CD8-positive, alpha-beta T cell (primary cell): ENCODE measurements at regions of chr19 and their contacts with region 1.

Region 1: DNA sequence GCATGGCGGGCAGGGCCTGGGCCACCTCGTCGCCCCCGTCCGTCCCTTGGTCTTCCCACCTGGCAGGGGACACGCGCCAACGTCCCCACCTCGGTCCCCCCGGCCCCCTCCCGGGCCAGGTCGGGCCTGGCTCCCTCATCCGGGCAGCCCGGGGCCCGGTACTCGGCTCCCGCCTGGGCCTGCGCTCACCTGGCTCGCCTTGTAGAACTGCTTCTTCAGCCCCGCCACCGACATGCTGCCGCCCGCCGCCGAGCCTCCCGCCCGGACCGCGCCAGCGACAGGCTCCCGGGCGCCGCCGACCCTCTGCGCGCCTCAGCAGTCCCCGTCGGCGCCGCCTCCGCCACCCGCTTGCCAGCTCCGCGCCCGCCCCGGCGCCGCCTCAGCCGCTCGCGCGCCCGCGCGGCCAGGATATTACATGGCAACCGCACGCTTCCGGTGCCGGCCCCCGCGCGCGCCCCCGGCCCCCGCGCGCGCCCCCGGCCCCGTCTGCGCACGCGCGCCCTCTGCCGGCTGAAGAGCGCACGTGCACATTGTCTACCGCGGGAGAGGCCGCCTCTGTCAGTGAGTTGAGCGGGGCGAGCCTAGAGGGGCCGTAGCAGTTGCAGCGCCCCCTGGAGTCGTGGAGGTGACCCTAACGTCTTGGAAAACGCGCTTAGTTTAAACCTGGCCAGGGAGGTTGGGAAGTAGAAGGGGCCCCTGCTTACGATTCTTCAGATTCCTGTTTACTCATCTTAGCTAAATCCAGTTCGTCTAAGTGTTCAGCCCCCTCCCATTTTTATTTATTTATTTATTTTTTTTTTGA is at the start of gene SH3GL1:
- DNase-seq: peak; percentile 80 to 97 (median 94)
- ATAC-seq: peak; percentile 66
- H3K4me3 ChIP-seq: peak within 1 kb of the TSS; percentile 83 to 92
- H3K4me3 Mint-ChIP-seq: peak within 1 kb of the TSS; percentile 91
- H3K27ac ChIP-seq: peak within 1 kb of the TSS; percentile 77 to 97
- H3K27ac Mint-ChIP-seq: peak within 1 kb of the TSS; percentile 98
- H3K4me1 ChIP-seq: peaks cover 44% of the 10 kb centered on the region
- H3K4me1 Mint-ChIP-seq: peaks cover 55% of the 10 kb centered on the region
- H3K27me3 ChIP-seq: no peaks in the 10 kb centered on the region
- H3K27me3 Mint-ChIP-seq: no peaks in the 10 kb centered on the region
- CTCF ChIP-seq: peak; percentile 71
- total RNA-seq, gene SH3GL1: 35.0 to 38.1 TPM

Region 2: DNA sequence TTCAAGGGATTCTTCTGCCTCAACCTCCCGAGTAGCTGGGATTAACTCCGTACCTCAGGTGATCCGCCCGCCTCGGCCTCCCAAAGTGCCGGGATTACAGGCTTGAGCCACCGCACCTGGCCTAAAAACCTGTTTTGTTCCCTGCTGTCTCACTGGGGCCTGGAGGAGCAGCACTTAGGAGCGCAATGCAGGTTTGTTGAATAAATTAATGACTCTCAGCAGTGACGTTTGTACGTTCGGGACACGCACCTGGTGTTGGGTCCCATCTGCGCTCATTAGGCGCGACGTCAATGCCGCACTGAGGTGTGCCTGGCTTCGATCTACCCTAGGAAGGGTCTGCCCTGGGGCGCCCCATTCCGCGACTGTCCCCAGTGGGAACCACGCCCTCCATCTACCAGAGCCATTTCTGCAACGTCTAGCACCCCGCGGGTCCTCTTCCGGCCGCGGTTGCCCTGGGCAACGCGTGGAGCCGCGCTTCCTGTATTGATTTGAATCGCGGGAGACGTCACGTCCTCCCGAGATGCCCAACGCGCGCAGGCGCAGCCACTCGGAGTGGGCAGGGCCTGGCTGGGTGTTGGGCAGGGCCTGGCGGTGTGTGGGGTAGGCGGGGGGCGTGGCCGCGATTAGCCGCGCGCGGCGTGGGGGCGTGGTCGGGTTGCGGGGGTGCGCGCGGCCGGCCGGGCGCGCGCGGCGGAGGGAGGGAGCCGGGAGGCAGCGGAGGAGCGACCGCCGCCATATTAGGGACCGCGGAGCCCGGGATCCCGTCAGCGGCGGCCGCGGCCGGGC is 894.5 kb before region 1 on chr19 and contains the start of gene FZR1:
- CTCF ChIA-PET with region 1: no interaction called
- POLR2A ChIA-PET with region 1: no interaction called
- intact Hi-C with region 1: loop called in 1 of 2 experiments (anchors 2 kb)
- DNase-seq: peak; percentile 99 to 100 (median 100)
- ATAC-seq: peak; percentile 85
- H3K4me3 ChIP-seq: peak within 1 kb of the TSS; percentile 76 to 83
- H3K4me3 Mint-ChIP-seq: peak within 1 kb of the TSS; percentile 85
- H3K27ac ChIP-seq: peak within 1 kb of the TSS; percentile 97
- H3K27ac Mint-ChIP-seq: peak within 1 kb of the TSS; percentile 97
- H3K4me1 ChIP-seq: peaks cover 36% of the 10 kb centered on the region
- H3K4me1 Mint-ChIP-seq: peaks cover 48% of the 10 kb centered on the region
- H3K27me3 ChIP-seq: no peaks in the 10 kb centered on the region
- H3K27me3 Mint-ChIP-seq: no peaks in the 10 kb centered on the region
- CTCF ChIP-seq: no peak
- total RNA-seq, gene FZR1: 130 to 142 TPM

Region 3: GRCh38 chr19:4007021-4007835 is 393.1 kb before region 1 on chr19 and contains the start of gene PIAS4:
- CTCF ChIA-PET with region 1: no interaction called
- POLR2A ChIA-PET with region 1: no interaction called
- intact Hi-C with region 1: loop called in 1 of 2 experiments (anchors 1 kb)
- DNase-seq: peak; percentile 89 to 99 (median 96)
- ATAC-seq: peak; percentile 91
- H3K4me3 ChIP-seq: peak within 1 kb of the TSS; percentile 68 to 87
- H3K4me3 Mint-ChIP-seq: peak within 1 kb of the TSS; percentile 83
- H3K27ac ChIP-seq: peak within 1 kb of the TSS; percentile 46 to 58
- H3K27ac Mint-ChIP-seq: peak within 1 kb of the TSS; percentile 84
- H3K4me1 ChIP-seq: peaks cover 38% of the 10 kb centered on the region
- H3K4me1 Mint-ChIP-seq: peaks cover 24% of the 10 kb centered on the region
- H3K27me3 ChIP-seq: no peaks in the 10 kb centered on the region
- H3K27me3 Mint-ChIP-seq: no peaks in the 10 kb centered on the region
- CTCF ChIP-seq: no peak
- total RNA-seq, gene PIAS4: 11.6 to 14.9 TPM

Region 4: GRCh38 chr19:4267101-4267900 is 133.0 kb before region 1 on chr19:
- CTCF ChIA-PET with region 1: interaction called, 3 read pairs
- POLR2A ChIA-PET with region 1: interaction called, 3 read pairs
- intact Hi-C with region 1: loop called (anchors 1 to 5 kb)
- DNase-seq: peak; percentile 37 to 76 (median 65)
- ATAC-seq: peak; percentile 70
- H3K4me3 ChIP-seq: no peak overlapping the region
- H3K4me3 Mint-ChIP-seq: no peak overlapping the region
- H3K27ac ChIP-seq: no peak overlapping the region
- H3K27ac Mint-ChIP-seq: peak overlapping the region; percentile 23
- H3K4me1 ChIP-seq: peaks cover 15% of the 10 kb centered on the region
- H3K4me1 Mint-ChIP-seq: peaks cover 25% of the 10 kb centered on the region
- H3K27me3 ChIP-seq: no peaks in the 10 kb centered on the region
- H3K27me3 Mint-ChIP-seq: no peaks in the 10 kb centered on the region
- CTCF ChIP-seq: peak; percentile 82

Region 5: DNA sequence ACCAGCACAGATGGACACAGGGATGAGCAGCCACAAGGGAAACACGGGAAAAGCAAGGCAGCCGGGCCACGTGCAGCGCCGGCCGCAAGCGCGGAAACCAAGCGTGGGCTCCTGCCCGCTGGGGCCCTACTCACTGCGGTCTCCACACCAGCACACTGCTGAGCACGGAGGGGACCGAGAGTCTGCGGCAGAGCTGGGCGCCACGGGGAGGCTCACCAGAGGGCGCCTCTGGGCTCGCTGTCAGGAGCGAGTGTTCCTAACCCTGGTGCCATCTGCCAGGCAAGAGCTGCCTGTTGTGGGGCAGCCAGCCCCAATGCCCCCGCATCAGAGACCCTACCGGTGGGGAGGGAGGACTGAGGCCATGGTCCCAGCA is 30.5 kb before region 1 on chr19:
- CTCF ChIA-PET with region 1: interaction called, 6 read pairs
- POLR2A ChIA-PET with region 1: interaction called, 11 read pairs
- intact Hi-C with region 1: loop called (anchors 1 kb)
- DNase-seq: peak; percentile 56 to 86 (median 75)
- ATAC-seq: peak; percentile 70
- H3K4me3 ChIP-seq: peak overlapping the region; percentile 58 to 65
- H3K4me3 Mint-ChIP-seq: peak overlapping the region; percentile 91
- H3K27ac ChIP-seq: peak overlapping the region; percentile 67 to 87
- H3K27ac Mint-ChIP-seq: peak overlapping the region; percentile 96
- H3K4me1 ChIP-seq: peaks cover 35% of the 10 kb centered on the region
- H3K4me1 Mint-ChIP-seq: peaks cover 32% of the 10 kb centered on the region
- H3K27me3 ChIP-seq: no peaks in the 10 kb centered on the region
- H3K27me3 Mint-ChIP-seq: no peaks in the 10 kb centered on the region
- CTCF ChIP-seq: peak; percentile 57

Region 6: DNA sequence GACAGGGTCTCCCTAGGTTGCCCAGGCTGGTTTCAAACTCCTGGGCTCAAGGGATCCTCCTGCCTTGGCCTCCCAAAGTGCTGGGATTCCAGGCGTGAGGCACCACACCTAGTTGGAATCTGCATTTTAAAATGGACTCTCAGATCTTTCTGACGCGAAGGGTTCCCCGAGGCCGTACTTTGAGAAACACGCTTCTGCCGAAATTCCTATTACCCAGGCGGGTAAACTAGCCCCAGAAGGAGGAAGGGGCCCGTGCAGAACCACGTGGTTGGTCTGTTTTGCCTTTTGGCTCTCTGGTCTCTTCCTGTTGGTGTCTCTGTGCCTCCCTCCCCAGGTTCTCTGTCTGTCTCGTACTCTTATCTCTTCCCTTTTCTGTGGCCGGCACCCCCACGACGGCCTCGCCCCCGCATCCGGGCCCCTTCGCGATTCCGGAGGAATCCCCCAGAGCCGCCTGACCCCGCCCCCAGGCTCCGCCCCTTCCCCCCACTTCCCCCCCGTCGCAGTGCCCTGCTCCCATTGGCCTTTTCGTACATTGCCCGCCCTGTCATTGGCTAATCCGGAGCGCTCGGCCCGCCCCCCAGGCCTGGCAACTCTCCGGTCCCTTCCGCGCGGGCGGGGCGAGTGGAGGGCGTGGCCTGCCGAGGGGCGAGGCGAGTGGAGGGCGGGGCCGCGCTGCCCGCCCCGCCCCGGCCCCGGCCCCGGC is 238.6 kb after region 1 on chr19 and contains the start of gene TNFAIP8L1:
- CTCF ChIA-PET with region 1: no interaction called
- POLR2A ChIA-PET with region 1: no interaction called
- intact Hi-C with region 1: loop called in 1 of 2 experiments (anchors 2 kb)
- DNase-seq: peak; percentile 97 to 100 (median 99)
- ATAC-seq: peak; percentile 94
- H3K4me3 ChIP-seq: peak within 1 kb of the TSS; percentile 83 to 94
- H3K4me3 Mint-ChIP-seq: peak within 1 kb of the TSS; percentile 94
- H3K27ac ChIP-seq: peak within 1 kb of the TSS; percentile 68 to 96
- H3K27ac Mint-ChIP-seq: peak within 1 kb of the TSS; percentile 95
- H3K4me1 ChIP-seq: peaks cover 45% of the 10 kb centered on the region
- H3K4me1 Mint-ChIP-seq: peaks cover 34% of the 10 kb centered on the region
- H3K27me3 ChIP-seq: no peaks in the 10 kb centered on the region
- H3K27me3 Mint-ChIP-seq: no peaks in the 10 kb centered on the region
- CTCF ChIP-seq: no peak
- total RNA-seq, gene TNFAIP8L1: 4.3 to 4.5 TPM